B cell (primary cell): ENCODE measurements at regions of chr5 and their contacts with region 1.

Region 1: GRCh38 chr5:140073296-140073695 is 30.2 kb upstream of the NRG2 start:
- DNase-seq: peak; percentile 61
- ATAC-seq: no peak
- H3K4me3 ChIP-seq: no peak overlapping the region
- H3K4me3 Mint-ChIP-seq: no peak overlapping the region
- H3K27ac ChIP-seq: no peak overlapping the region
- H3K27ac Mint-ChIP-seq: no peak overlapping the region
- H3K4me1 ChIP-seq: no peaks in the 10 kb centered on the region
- H3K4me1 Mint-ChIP-seq: no peaks in the 10 kb centered on the region
- H3K27me3 ChIP-seq: peaks cover 0 to 17% (median 5%) of the 10 kb centered on the region in 4 experiments
- H3K27me3 Mint-ChIP-seq: peaks cover 26% of the 10 kb centered on the region
- CTCF ChIP-seq: peak; percentile 89

Region 2: DNA sequence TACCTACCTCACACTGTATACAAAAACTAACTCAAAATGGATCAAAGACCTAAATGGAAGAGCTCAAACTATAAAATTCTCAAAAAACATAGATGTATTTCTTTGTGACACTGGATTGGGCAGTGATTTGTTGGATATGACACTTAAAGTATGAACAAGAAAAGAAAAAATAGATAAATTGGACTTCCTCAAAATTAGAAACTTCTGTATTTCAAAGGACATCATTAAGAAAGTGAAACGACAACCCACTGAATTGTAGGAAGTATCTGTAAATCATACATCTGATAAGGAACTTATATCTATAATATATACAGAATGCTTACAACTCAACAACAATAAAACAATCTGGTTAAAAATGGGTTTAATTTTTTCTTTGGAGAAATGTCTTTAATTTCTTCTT is 126.9 kb before region 1 on chr5:
- CTCF ChIA-PET with region 1: no interaction called
- POLR2A ChIA-PET with region 1: no interaction called
- intact Hi-C with region 1: no loop called
- DNase-seq: peak; percentile 44
- ATAC-seq: peak; percentile 10
- H3K4me3 ChIP-seq: peak overlapping the region in 1 of 5 experiments; percentile 44
- H3K4me3 Mint-ChIP-seq: peak overlapping the region; percentile 27
- H3K27ac ChIP-seq: peak overlapping the region in 1 of 2 donors; percentile 71
- H3K27ac Mint-ChIP-seq: peak overlapping the region; percentile 16
- H3K4me1 ChIP-seq: peaks cover 7 to 18% of the 10 kb centered on the region in 2 donors
- H3K4me1 Mint-ChIP-seq: peaks cover 26% of the 10 kb centered on the region
- H3K27me3 ChIP-seq: peaks cover 0 to 4% (median 1%) of the 10 kb centered on the region in 4 experiments
- H3K27me3 Mint-ChIP-seq: peaks cover 20% of the 10 kb centered on the region
- CTCF ChIP-seq: no peak

Region 3: DNA sequence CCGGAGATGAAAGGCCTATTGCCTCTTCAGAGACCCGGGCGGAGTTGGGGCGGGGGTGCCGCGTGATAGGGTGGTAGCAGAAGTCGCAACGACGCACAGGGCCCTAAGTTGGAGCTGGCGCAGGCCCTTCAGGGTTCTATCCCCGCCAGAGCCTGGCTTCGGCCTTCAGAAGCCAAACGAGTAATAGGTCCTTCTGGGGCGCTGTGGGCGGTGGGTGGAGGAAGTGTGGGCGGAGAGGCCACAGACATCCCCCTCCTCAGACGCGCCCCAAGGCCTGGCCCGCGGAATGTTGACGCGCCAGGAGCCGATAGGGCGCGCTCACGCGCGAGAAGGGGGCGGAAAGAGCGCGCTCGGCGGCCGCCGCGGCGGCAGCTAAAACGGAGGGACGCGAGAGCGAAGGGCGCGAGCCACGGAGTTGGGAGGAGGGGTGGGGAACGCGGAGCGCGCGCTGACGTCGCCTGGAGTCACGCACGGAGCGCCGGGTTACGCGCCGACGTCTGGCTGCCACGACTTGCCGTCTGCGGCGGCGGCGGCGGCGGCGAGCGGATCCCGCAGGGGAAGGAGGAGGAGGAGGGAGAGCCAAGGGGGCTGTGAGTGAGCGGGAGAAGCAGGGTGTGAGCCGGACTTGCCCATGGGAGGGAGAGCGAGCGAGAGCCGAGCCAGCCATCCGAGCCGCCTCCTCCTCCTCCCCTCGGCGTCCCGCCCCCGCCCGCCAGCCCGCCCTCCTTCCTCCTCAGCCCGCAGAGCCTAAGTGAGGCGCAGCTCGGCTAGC is 34.2 kb after region 1 on chr5:
- CTCF ChIA-PET with region 1: interaction called, 7 read pairs
- POLR2A ChIA-PET with region 1: no interaction called
- intact Hi-C with region 1: loop called (anchors 1 kb)
- DNase-seq: peak; percentile 98
- ATAC-seq: peak; percentile 85
- H3K4me3 ChIP-seq: peak overlapping the region in 4 of 5 experiments; percentile 60 to 75 (median 68)
- H3K4me3 Mint-ChIP-seq: peak overlapping the region; percentile 96
- H3K27ac ChIP-seq: peak overlapping the region; percentile 97 to 99
- H3K27ac Mint-ChIP-seq: peak overlapping the region; percentile 99
- H3K4me1 ChIP-seq: peaks cover 35% of the 10 kb centered on the region in 2 donors
- H3K4me1 Mint-ChIP-seq: peaks cover 46% of the 10 kb centered on the region
- H3K27me3 ChIP-seq: peaks cover 5 to 23% (median 13%) of the 10 kb centered on the region in 4 experiments
- H3K27me3 Mint-ChIP-seq: peaks cover 20% of the 10 kb centered on the region
- CTCF ChIP-seq: peak; percentile 43

Region 4: DNA sequence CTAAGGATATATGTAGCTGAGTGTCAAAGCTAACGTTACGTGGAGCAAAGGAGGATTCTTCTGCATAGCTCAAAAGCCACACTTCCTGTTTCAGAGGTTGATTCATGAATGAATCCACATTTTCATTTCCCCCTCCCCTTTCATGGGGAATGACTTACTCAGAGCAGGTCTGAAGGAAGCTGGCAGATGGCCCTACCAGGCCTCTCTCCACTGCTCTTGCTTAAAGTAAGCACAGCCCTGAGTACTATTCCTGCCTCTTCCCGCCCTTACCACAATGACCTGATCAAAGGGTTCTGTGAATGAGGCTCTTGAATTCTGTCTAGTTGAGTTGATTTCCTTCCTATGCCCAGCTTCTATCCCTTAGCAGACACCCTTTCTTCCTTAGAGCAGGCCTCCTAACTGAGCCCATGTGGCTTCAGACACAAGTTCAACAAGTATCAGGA is 58.7 kb after region 1 on chr5:
- CTCF ChIA-PET with region 1: interaction called, 14 read pairs
- POLR2A ChIA-PET with region 1: no interaction called
- intact Hi-C with region 1: no loop called
- DNase-seq: no peak
- ATAC-seq: peak; percentile 24
- H3K4me3 ChIP-seq: no peak overlapping the region
- H3K4me3 Mint-ChIP-seq: no peak overlapping the region
- H3K27ac ChIP-seq: no peak overlapping the region
- H3K27ac Mint-ChIP-seq: no peak overlapping the region
- H3K4me1 ChIP-seq: peaks cover 8 to 11% of the 10 kb centered on the region in 2 donors
- H3K4me1 Mint-ChIP-seq: peaks cover 32% of the 10 kb centered on the region
- H3K27me3 ChIP-seq: no peaks in the 10 kb centered on the region
- H3K27me3 Mint-ChIP-seq: no peaks in the 10 kb centered on the region
- CTCF ChIP-seq: no peak

Region 5: GRCh38 chr5:140157032-140157803 is 83.9 kb after region 1 on chr5:
- CTCF ChIA-PET with region 1: interaction called, 513 read pairs
- POLR2A ChIA-PET with region 1: no interaction called
- intact Hi-C with region 1: loop called (anchors 1 kb)
- DNase-seq: peak; percentile 89
- ATAC-seq: peak; percentile 100
- H3K4me3 ChIP-seq: peak overlapping the region in 3 of 5 experiments; percentile 1 to 26 (median 20)
- H3K4me3 Mint-ChIP-seq: peak overlapping the region; percentile 68
- H3K27ac ChIP-seq: no peak overlapping the region
- H3K27ac Mint-ChIP-seq: no peak overlapping the region
- H3K4me1 ChIP-seq: peaks cover 7 to 17% of the 10 kb centered on the region in 2 donors
- H3K4me1 Mint-ChIP-seq: peaks cover 9% of the 10 kb centered on the region
- H3K27me3 ChIP-seq: no peaks in the 10 kb centered on the region
- H3K27me3 Mint-ChIP-seq: no peaks in the 10 kb centered on the region
- CTCF ChIP-seq: peak; percentile 88